Naive thymus-derived CD4-positive, alpha-beta T cell (primary cell): ENCODE measurements at regions of chr17 and their contacts with region 1.

Region 1: GRCh38 chr17:72725433-72726068 is 366.9 kb downstream of the SLC39A11 start:
- DNase-seq: peak in 7 of 9 donors; percentile 22 to 57 (median 41)
- ATAC-seq: peak; percentile 60
- H3K4me3 ChIP-seq: no peak overlapping the region
- H3K4me3 Mint-ChIP-seq: peak overlapping the region in 9 of 10 donors; percentile 3 to 82 (median 48)
- H3K27ac ChIP-seq: no peak overlapping the region
- H3K27ac Mint-ChIP-seq: peak overlapping the region; percentile 76 to 97 (median 87)
- H3K4me1 ChIP-seq: peaks cover 10 to 26% of the 10 kb centered on the region in 2 donors
- H3K4me1 Mint-ChIP-seq: peaks cover 27 to 61% (median 30%) of the 10 kb centered on the region in 7 donors
- H3K27me3 ChIP-seq: no peaks in the 10 kb centered on the region
- H3K27me3 Mint-ChIP-seq: no peaks in the 10 kb centered on the region

Region 2: DNA sequence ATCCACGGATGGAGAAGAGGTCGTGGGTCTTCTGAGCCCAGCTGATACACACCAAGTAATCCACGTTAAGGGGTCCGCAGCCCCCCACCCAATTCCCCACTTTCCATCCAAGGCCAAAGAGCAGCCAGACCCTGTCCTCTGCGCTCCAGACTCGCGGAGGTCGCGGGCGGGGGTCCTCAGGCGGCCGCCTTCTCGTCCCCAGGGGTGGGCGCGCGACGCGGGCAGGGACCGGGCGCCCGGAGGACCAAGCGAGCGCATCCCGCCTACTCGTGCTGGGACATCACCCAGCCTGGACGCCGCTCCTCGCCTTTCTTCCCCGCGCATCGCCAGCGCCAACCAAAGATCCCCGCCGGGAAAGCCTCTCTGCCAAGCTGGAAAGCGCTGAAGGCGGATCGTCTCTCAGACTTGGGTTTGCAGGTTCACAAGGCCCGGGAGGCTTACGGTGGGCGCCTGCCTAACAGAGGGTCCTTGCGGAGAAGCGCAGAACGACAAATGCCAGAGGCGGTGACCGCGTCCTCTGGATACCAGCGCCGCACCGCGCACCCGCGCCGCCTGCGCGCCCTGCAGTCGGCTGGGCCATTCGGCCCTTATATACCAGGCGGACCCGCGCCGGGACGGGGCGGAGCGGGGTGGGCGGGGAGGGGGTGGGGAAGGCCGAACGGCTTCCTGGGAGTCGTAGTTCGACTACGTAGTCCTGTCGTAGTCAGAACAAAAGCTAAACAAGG is 133.1 kb before region 1 on chr17:
- CTCF ChIA-PET with region 1: interaction called, 3 read pairs
- POLR2A ChIA-PET with region 1: interaction called, 3 read pairs
- intact Hi-C with region 1: loop called in 1 of 2 experiments (anchors 2 kb)
- DNase-seq: peak in 5 of 9 donors; percentile 6 to 77 (median 37)
- ATAC-seq: peak; percentile 79
- H3K4me3 ChIP-seq: peak overlapping the region; percentile 35
- H3K4me3 Mint-ChIP-seq: peak overlapping the region; percentile 78 to 97 (median 86)
- H3K27ac ChIP-seq: no peak overlapping the region
- H3K27ac Mint-ChIP-seq: peak overlapping the region in 3 of 9 donors; percentile 33 to 71 (median 50)
- H3K4me1 ChIP-seq: peaks cover 6 to 10% of the 10 kb centered on the region in 2 donors
- H3K4me1 Mint-ChIP-seq: peaks cover 13 to 33% (median 25%) of the 10 kb centered on the region in 7 donors
- H3K27me3 ChIP-seq: no peaks in the 10 kb centered on the region
- H3K27me3 Mint-ChIP-seq: peaks cover 46 to 66% (median 53%) of the 10 kb centered on the region in 5 donors

Region 3: DNA sequence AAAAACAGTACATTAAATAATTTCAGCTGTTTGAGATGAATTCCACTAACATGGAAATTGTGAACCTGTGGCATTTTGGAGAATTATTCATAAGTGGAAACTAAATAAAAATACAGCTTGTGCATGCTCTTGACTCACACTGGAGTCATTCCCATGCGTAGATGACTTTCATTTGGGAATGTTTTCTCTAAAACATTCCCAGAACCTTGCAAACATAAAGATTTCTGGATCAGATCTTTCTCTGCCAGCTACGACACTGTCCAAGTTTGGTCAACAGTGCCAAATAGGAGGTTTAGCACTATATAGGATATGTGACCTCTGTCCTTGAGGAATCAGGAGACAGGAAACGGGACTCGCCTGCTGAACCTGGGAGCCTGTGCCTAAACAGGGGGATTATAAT is 34.0 kb before region 1 on chr17:
- CTCF ChIA-PET with region 1: no interaction called
- POLR2A ChIA-PET with region 1: no interaction called
- intact Hi-C with region 1: no loop called
- DNase-seq: no peak
- ATAC-seq: no peak
- H3K4me3 ChIP-seq: no peak overlapping the region
- H3K4me3 Mint-ChIP-seq: no peak overlapping the region
- H3K27ac ChIP-seq: no peak overlapping the region
- H3K27ac Mint-ChIP-seq: no peak overlapping the region
- H3K4me1 ChIP-seq: no peaks in the 10 kb centered on the region
- H3K4me1 Mint-ChIP-seq: no peaks in the 10 kb centered on the region
- H3K27me3 ChIP-seq: no peaks in the 10 kb centered on the region
- H3K27me3 Mint-ChIP-seq: no peaks in the 10 kb centered on the region

Region 4: DNA sequence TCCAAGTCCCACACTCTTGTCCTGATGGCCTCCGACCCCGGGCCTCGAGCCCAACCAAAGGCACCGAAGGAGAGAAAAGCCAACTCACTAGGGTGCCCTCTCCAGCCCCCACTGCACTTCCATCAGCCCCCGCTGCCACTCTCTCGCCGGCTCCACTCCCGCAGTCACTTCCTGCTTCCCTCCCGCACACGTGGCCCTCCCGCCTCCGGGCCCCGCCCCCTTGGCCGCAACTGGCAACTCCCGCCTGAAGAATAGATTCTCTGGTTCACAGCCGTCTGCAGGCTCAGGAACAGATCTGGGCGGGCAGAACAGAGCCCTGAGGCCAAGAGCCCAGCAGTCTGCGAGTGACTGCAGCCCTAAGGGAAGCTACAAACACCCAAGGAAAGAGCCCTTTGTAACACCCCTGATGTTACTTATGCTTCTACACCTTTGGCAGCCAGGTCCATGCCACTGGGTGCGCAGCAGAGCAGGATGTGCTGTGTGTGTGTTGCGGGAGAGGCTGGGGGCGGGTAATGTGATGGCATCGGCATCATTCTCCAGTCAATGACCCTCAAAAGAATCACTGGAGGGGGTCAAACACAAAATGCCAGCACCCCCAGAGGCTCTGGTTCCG is 367.1 kb after region 1 on chr17 and contains the start of gene SLC39A11:
- CTCF ChIA-PET with region 1: interaction called, 5 read pairs
- POLR2A ChIA-PET with region 1: interaction called, 3 read pairs
- intact Hi-C with region 1: loop called (anchors 1 to 2 kb)
- DNase-seq: peak; percentile 77 to 92 (median 85)
- ATAC-seq: peak; percentile 99
- H3K4me3 ChIP-seq: peak within 1 kb of the TSS; percentile 69
- H3K4me3 Mint-ChIP-seq: peak within 1 kb of the TSS; percentile 90 to 100 (median 96)
- H3K27ac ChIP-seq: peak within 1 kb of the TSS; percentile 63
- H3K27ac Mint-ChIP-seq: peak within 1 kb of the TSS; percentile 87 to 99 (median 93)
- H3K4me1 ChIP-seq: peaks cover 7 to 20% of the 10 kb centered on the region in 2 donors
- H3K4me1 Mint-ChIP-seq: peaks cover 0 to 40% (median 32%) of the 10 kb centered on the region in 7 donors
- H3K27me3 ChIP-seq: no peaks in the 10 kb centered on the region
- H3K27me3 Mint-ChIP-seq: peaks cover 0 to 13% (median 0%) of the 10 kb centered on the region in 5 donors
- total RNA-seq, gene SLC39A11: 16.9 to 36.7 (median 21.6) TPM

Region 5: DNA sequence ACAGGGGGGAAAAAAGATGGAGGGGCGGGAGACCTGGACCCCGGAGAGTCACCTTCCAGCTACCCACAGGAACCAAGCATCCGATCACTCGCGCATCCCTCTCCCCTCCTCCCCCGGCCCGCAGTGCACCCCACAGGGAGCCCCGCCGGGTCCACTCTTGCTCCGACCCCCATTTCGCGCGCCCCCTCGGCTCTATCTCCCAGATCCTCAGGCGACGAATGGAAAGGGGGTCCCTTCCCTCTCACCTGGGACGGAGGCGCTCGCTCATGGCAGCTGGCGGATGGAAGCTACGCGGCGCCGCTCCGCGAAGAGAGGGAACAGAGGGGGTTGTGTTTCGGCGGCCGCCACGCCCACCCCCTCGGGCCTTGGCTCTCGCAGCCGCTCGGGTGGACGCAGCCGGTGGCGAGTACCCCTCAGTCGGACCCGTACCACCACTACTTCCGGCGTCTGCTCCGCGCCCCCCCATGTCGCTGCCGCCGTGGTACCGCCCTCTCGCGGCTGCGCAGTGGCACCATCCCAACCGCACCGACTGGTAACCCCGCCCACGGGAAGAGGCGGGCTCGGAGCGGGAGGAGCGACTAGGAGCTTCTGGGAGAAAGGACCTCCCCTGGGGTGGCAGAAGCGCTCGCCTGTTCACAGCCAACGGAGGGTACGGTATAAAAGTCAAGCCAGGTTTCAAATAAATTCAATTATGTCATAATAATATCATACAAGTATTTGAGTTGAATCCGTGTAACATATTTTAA is 506.5 kb after region 1 on chr17:
- CTCF ChIA-PET with region 1: interaction called, 9 read pairs
- POLR2A ChIA-PET with region 1: interaction called, 7 read pairs
- intact Hi-C with region 1: loop called (anchors 1 to 5 kb)
- DNase-seq: peak; percentile 93 to 99 (median 96)
- ATAC-seq: peak; percentile 98
- H3K4me3 ChIP-seq: peak overlapping the region; percentile 87
- H3K4me3 Mint-ChIP-seq: peak overlapping the region; percentile 90 to 98 (median 95)
- H3K27ac ChIP-seq: peak overlapping the region; percentile 86
- H3K27ac Mint-ChIP-seq: peak overlapping the region; percentile 92 to 98 (median 96)
- H3K4me1 ChIP-seq: peaks cover 20 to 32% of the 10 kb centered on the region in 2 donors
- H3K4me1 Mint-ChIP-seq: peaks cover 52 to 81% (median 70%) of the 10 kb centered on the region in 7 donors
- H3K27me3 ChIP-seq: no peaks in the 10 kb centered on the region
- H3K27me3 Mint-ChIP-seq: no peaks in the 10 kb centered on the region

Region 6: DNA sequence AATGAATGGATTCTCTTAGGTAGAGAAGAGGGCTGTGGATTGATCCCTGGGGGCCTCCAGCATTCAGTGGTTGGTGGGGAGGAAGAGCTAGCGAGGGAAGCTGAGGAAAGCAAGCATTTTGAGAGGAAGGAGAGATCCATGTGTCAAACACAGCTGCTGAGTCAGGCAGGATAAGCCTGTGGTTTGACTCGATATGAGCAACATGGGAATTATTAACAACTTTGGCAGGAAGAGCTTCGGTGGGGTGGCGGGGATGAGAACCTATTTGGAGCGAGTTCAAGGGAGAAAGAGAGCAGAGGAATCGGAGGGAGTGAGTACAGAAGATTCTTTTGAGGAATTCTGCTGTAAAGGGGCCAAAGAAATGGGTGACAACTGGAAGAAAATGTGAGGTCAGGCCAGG is 645.7 kb after region 1 on chr17:
- CTCF ChIA-PET with region 1: interaction called, 78 read pairs
- POLR2A ChIA-PET with region 1: interaction called, 3 read pairs
- intact Hi-C with region 1: loop called (anchors 1 kb)
- DNase-seq: no peak
- ATAC-seq: no peak
- H3K4me3 ChIP-seq: no peak overlapping the region
- H3K4me3 Mint-ChIP-seq: no peak overlapping the region
- H3K27ac ChIP-seq: no peak overlapping the region
- H3K27ac Mint-ChIP-seq: no peak overlapping the region
- H3K4me1 ChIP-seq: no peaks in the 10 kb centered on the region
- H3K4me1 Mint-ChIP-seq: peaks cover 0 to 3% (median 0%) of the 10 kb centered on the region in 7 donors
- H3K27me3 ChIP-seq: no peaks in the 10 kb centered on the region
- H3K27me3 Mint-ChIP-seq: peaks cover 0 to 6% (median 0%) of the 10 kb centered on the region in 5 donors

Region 7: GRCh38 chr17:73719588-73720071 is 994.1 kb after region 1 on chr17:
- CTCF ChIA-PET with region 1: no interaction called
- POLR2A ChIA-PET with region 1: interaction called, 3 read pairs
- intact Hi-C with region 1: loop called (anchors 5 kb)
- DNase-seq: no peak
- ATAC-seq: no peak
- H3K4me3 ChIP-seq: no peak overlapping the region
- H3K4me3 Mint-ChIP-seq: peak overlapping the region in 4 of 10 donors; percentile 30 to 69 (median 59)
- H3K27ac ChIP-seq: no peak overlapping the region
- H3K27ac Mint-ChIP-seq: peak overlapping the region in 7 of 9 donors; percentile 48 to 98 (median 82)
- H3K4me1 ChIP-seq: peaks cover 18 to 45% of the 10 kb centered on the region in 2 donors
- H3K4me1 Mint-ChIP-seq: peaks cover 20 to 66% (median 57%) of the 10 kb centered on the region in 7 donors
- H3K27me3 ChIP-seq: no peaks in the 10 kb centered on the region
- H3K27me3 Mint-ChIP-seq: peaks cover 0 to 7% (median 0%) of the 10 kb centered on the region in 5 donors

Region 8: DNA sequence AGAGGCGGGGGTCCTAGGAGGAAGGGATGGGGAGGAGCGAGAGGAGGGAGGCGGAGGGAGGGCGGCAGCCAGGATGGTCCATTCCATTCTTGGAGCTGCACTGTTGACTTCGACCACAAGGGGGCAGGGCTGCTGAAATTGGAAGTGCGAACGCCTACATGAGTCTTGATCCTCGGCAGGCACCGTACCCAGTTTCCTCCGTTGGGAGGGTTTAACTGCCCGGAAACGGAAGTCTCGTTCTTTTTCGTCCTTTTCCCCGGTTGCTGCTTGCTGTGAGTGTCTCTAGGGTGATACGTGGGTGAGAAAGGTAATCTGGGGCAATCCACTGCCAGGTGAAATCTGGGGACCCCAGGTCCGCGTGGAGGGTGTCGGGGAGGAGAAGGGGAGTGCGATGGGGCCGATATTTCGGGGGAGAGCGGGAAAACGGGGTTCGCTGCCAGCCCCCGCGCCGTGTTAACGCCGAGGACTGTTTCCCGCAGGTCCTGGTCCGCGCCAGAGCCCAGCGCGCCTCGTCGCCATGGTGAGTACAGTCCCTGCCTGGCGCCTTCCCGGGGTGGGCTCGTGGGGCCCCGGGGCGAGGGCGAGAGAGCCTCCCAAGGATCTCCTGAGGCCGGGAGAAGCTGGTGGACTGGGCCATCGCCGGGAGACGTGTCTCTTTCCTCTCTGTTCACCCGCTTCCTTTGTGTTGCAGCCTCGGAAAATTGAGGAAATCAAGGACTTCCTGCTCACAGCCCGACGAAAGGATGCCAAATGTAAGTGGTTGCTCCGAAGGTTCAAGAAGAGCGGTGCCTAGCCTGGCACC is 1478.1 kb after region 1 on chr17 and contains the start of gene RPL38:
- CTCF ChIA-PET with region 1: interaction called, 4 read pairs
- POLR2A ChIA-PET with region 1: no interaction called
- intact Hi-C with region 1: loop called in 1 of 2 experiments (anchors 5 kb)
- DNase-seq: peak; percentile 83 to 95 (median 94)
- ATAC-seq: peak; percentile 98
- H3K4me3 ChIP-seq: peak within 1 kb of the TSS; percentile 89
- H3K4me3 Mint-ChIP-seq: peak within 1 kb of the TSS; percentile 85 to 100 (median 98)
- H3K27ac ChIP-seq: peak within 1 kb of the TSS; percentile 86
- H3K27ac Mint-ChIP-seq: peak within 1 kb of the TSS; percentile 89 to 98 (median 96)
- H3K4me1 ChIP-seq: peaks cover 16 to 20% of the 10 kb centered on the region in 2 donors
- H3K4me1 Mint-ChIP-seq: peaks cover 24 to 49% (median 34%) of the 10 kb centered on the region in 7 donors
- H3K27me3 ChIP-seq: peaks cover 0 to 5% of the 10 kb centered on the region in 2 donors
- H3K27me3 Mint-ChIP-seq: peaks cover 8 to 16% (median 11%) of the 10 kb centered on the region in 5 donors
- total RNA-seq, gene RPL38: 1,097 to 2,553 (median 2,002) TPM